Activated B cell treated with CpG ODN at 0.5 μM for 24 hours (primary cell): ENCODE measurements at regions of chr13 and their contacts with region 1.

Region 1: GRCh38 chr13:40069173-40070044 is 413.9 kb downstream of the COG6 start:
- DNase-seq: peak; percentile 50
- ATAC-seq: peak; percentile 89
- H3K4me3 Mint-ChIP-seq: peak overlapping the region; percentile 47
- H3K27ac Mint-ChIP-seq: peak overlapping the region; percentile 19
- H3K4me1 Mint-ChIP-seq: peaks cover 12% of the 10 kb centered on the region
- H3K27me3 Mint-ChIP-seq: no peaks in the 10 kb centered on the region
- CTCF ChIP-seq: peak; percentile 27

Region 2: GRCh38 chr13:39501702-39502324 is 567.6 kb before region 1 on chr13:
- CTCF ChIA-PET with region 1: no interaction called
- POLR2A ChIA-PET with region 1: no interaction called
- intact Hi-C with region 1: no loop called
- DNase-seq: no peak
- ATAC-seq: no peak
- H3K4me3 Mint-ChIP-seq: no peak overlapping the region
- H3K27ac Mint-ChIP-seq: no peak overlapping the region
- H3K4me1 Mint-ChIP-seq: no peaks in the 10 kb centered on the region
- H3K27me3 Mint-ChIP-seq: no peaks in the 10 kb centered on the region
- CTCF ChIP-seq: no peak

Region 3: DNA sequence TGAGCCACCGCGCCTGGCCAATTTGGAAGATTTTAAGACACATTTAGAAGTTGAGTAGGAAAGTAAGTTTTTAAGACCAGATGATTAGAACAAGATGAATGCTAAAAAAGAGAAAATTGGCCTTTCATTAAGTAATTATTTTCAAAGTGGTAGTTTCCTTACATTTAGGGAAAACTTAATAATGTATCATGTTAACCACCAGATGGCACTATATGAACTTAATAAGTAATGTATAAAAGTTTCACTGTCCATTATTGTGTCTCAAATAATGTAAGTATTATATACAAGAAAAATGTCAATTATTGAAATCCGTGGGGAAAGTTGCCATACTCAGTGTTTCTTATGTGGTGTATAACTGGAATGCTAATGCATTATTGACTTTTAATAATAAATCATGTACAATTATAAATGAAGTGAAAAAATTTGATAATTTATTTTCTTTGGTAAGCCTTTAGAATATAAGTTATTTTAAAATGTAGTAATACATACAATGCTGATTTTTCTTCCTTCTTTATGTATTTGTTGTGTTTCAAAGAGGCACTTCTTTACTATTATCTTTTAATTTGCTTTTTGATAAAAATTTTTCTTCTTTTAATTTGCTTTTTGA is 384.8 kb before region 1 on chr13:
- CTCF ChIA-PET with region 1: interaction called, 4 read pairs
- POLR2A ChIA-PET with region 1: no interaction called
- intact Hi-C with region 1: loop called (anchors 5 kb)
- DNase-seq: no peak
- ATAC-seq: peak; percentile 28
- H3K4me3 Mint-ChIP-seq: no peak overlapping the region
- H3K27ac Mint-ChIP-seq: no peak overlapping the region
- H3K4me1 Mint-ChIP-seq: peaks cover 14% of the 10 kb centered on the region
- H3K27me3 Mint-ChIP-seq: no peaks in the 10 kb centered on the region
- CTCF ChIP-seq: no peak

Region 4: GRCh38 chr13:39777527-39778061 is 291.8 kb before region 1 on chr13:
- CTCF ChIA-PET with region 1: no interaction called
- POLR2A ChIA-PET with region 1: no interaction called
- intact Hi-C with region 1: no loop called
- DNase-seq: no peak
- ATAC-seq: peak; percentile 47
- H3K4me3 Mint-ChIP-seq: no peak overlapping the region
- H3K27ac Mint-ChIP-seq: no peak overlapping the region
- H3K4me1 Mint-ChIP-seq: peaks cover 8% of the 10 kb centered on the region
- H3K27me3 Mint-ChIP-seq: no peaks in the 10 kb centered on the region
- CTCF ChIP-seq: no peak

Region 5: DNA sequence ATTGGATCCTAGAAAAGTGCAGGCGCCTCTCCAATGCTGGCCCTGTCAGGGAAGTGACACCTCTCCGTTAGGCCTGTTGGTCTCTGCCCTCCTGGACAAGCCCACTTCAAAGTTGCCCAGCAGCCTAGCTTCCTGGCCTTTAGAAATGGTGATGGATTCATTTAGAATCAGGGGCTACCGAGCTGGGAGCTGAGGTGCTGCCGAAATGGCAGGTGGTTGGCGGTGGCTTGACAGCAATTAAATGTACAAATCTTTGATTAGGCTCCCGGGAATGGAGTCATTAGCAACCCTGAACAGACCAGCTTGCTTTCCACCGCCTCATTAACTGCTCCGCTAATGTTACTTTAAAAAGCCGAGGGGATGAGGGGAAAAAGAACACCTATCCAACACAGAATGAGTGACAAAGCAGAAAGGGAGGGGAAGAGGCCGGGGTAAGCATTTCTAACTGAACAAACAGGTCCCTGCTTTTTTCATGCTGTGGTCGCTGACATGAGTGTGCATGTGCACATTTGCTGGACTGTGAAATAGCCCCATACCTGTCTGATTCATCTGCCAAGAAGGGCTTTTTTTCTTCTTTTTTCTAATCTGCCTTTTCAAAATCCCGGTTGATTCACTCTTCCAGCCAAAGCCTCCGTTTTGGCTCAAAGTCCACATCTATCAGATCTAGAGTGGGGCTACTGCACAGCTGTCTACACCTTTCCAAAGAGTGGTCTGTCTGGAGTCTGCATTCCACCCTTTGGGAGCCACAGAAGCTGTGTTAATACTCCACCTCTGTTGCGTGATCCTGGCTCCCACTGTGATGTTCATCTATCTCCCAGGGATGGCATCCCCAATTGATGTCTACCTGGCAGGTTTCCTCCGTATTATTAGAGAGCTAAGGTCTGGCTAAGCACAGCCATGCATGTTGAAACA is 17.9 kb after region 1 on chr13:
- CTCF ChIA-PET with region 1: interaction called, 11 read pairs
- POLR2A ChIA-PET with region 1: no interaction called
- intact Hi-C with region 1: no loop called
- DNase-seq: no peak
- ATAC-seq: no peak
- H3K4me3 Mint-ChIP-seq: no peak overlapping the region
- H3K27ac Mint-ChIP-seq: no peak overlapping the region
- H3K4me1 Mint-ChIP-seq: no peaks in the 10 kb centered on the region
- H3K27me3 Mint-ChIP-seq: no peaks in the 10 kb centered on the region
- CTCF ChIP-seq: no peak

Region 6: DNA sequence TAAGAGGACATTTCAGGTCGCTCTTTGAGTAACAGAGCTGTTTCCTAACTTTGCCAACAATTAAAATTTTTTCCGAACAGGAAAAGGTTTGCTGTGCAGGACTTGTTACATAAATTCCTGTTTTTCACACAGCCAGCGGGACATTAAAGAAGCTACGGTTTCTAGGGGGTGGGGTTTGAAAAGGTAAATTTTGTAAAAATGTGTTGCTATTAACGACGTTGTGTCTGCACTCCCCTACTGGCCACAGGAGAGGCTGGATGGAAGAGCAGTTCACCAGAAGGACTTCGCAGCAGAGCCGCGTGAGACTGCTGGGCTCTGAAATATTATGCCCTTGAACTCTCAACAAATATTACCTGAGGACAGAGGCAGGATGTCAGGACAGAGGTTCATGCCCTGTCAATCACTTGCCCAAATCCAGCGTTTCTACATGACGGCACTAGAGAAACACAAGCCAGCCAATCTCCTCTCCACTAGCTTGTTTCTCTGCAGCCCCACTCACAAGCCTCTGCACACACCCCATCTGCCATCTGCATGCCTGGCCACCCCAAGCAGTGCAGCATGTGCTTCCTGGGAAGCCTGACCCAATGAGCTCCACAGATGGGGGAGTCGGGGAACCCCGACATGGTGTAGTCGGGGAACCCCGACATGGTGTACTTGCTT is 495.1 kb after region 1 on chr13:
- CTCF ChIA-PET with region 1: interaction called, 3 read pairs
- POLR2A ChIA-PET with region 1: no interaction called
- intact Hi-C with region 1: loop called (anchors 5 kb)
- DNase-seq: no peak
- ATAC-seq: peak; percentile 47
- H3K4me3 Mint-ChIP-seq: peak overlapping the region; percentile 63
- H3K27ac Mint-ChIP-seq: peak overlapping the region; percentile 59
- H3K4me1 Mint-ChIP-seq: peaks cover 87% of the 10 kb centered on the region
- H3K27me3 Mint-ChIP-seq: no peaks in the 10 kb centered on the region
- CTCF ChIP-seq: no peak

Region 7: GRCh38 chr13:40682449-40683240 is 613.2 kb after region 1 on chr13:
- CTCF ChIA-PET with region 1: interaction called, 130 read pairs
- POLR2A ChIA-PET with region 1: interaction called, 3 read pairs
- intact Hi-C with region 1: loop called (anchors 1 kb)
- DNase-seq: no peak
- ATAC-seq: no peak
- H3K4me3 Mint-ChIP-seq: no peak overlapping the region
- H3K27ac Mint-ChIP-seq: no peak overlapping the region
- H3K4me1 Mint-ChIP-seq: peaks cover 24% of the 10 kb centered on the region
- H3K27me3 Mint-ChIP-seq: no peaks in the 10 kb centered on the region
- CTCF ChIP-seq: no peak